IMR-90 (cell line): ENCODE measurements at regions of chr19 and their contacts with region 1.

Region 1: GRCh38 chr19:23116802-23117571 is at the start of gene ZNF730:
- DNase-seq: peak; percentile 68
- ATAC-seq: peak; percentile 98
- H3K4me3 ChIP-seq: peak within 1 kb of the TSS; percentile 95
- H3K27ac ChIP-seq: peak within 1 kb of the TSS; percentile 77; the same call in 1 of the 2 replicates
- H3K4me1 ChIP-seq: no peaks in the 10 kb centered on the region
- H3K27me3 ChIP-seq: no peaks in the 10 kb centered on the region
- CTCF ChIP-seq: no peak
- POLR2A ChIP-seq: no peak
- RAD21 ChIP-seq: peak; percentile 6; the same call in 1 of the 2 replicates
- total RNA-seq, gene ZNF730: 3.2 and 5.0 TPM in 2 replicates

Region 2: GRCh38 chr19:23033721-23034120 is 83.3 kb before region 1 on chr19:
- CTCF ChIA-PET with region 1: no interaction called
- POLR2A ChIA-PET with region 1: no interaction called
- dilution Hi-C with region 1: no loop called
- in situ Hi-C with region 1: no loop called
- intact Hi-C with region 1: no loop called
- DNase-seq: no peak
- ATAC-seq: no peak
- H3K4me3 ChIP-seq: no peak overlapping the region
- H3K27ac ChIP-seq: no peak overlapping the region
- H3K4me1 ChIP-seq: no peaks in the 10 kb centered on the region
- H3K27me3 ChIP-seq: no peaks in the 10 kb centered on the region
- CTCF ChIP-seq: no peak
- POLR2A ChIP-seq: no peak
- RAD21 ChIP-seq: no peak

Region 3: GRCh38 chr19:23054426-23054825 is 62.6 kb before region 1 on chr19:
- CTCF ChIA-PET with region 1: no interaction called
- POLR2A ChIA-PET with region 1: no interaction called
- dilution Hi-C with region 1: no loop called
- in situ Hi-C with region 1: no loop called
- intact Hi-C with region 1: no loop called
- DNase-seq: no peak
- ATAC-seq: no peak
- H3K4me3 ChIP-seq: no peak overlapping the region
- H3K27ac ChIP-seq: no peak overlapping the region
- H3K4me1 ChIP-seq: no peaks in the 10 kb centered on the region
- H3K27me3 ChIP-seq: no peaks in the 10 kb centered on the region
- CTCF ChIP-seq: no peak
- POLR2A ChIP-seq: no peak
- RAD21 ChIP-seq: no peak

Region 4: GRCh38 chr19:23249911-23250649 is 133.1 kb after region 1 on chr19 and contains the start of gene ZNF724:
- CTCF ChIA-PET with region 1: no interaction called
- POLR2A ChIA-PET with region 1: no interaction called
- dilution Hi-C with region 1: no loop called
- in situ Hi-C with region 1: no loop called
- intact Hi-C with region 1: loop called (anchors 10 kb)
- DNase-seq: peak; percentile 97
- ATAC-seq: peak; percentile 100
- H3K4me3 ChIP-seq: peak within 1 kb of the TSS; percentile 65
- H3K27ac ChIP-seq: peak within 1 kb of the TSS; percentile 38
- H3K4me1 ChIP-seq: no peaks in the 10 kb centered on the region
- H3K27me3 ChIP-seq: no peaks in the 10 kb centered on the region
- CTCF ChIP-seq: no peak
- POLR2A ChIP-seq: no peak
- RAD21 ChIP-seq: no peak
- total RNA-seq, gene ZNF724: 18.3 and 20.1 TPM in 2 replicates

Region 5: GRCh38 chr19:23395041-23395721 is 278.2 kb after region 1 on chr19 and contains the start of gene ZNF91:
- CTCF ChIA-PET with region 1: no interaction called
- POLR2A ChIA-PET with region 1: no interaction called
- dilution Hi-C with region 1: no loop called
- in situ Hi-C with region 1: no loop called
- intact Hi-C with region 1: loop called (anchors 5 kb)
- DNase-seq: peak; percentile 96
- ATAC-seq: peak; percentile 96
- H3K4me3 ChIP-seq: peak within 1 kb of the TSS; percentile 97
- H3K27ac ChIP-seq: peak within 1 kb of the TSS; percentile 97
- H3K4me1 ChIP-seq: no peaks in the 10 kb centered on the region
- H3K27me3 ChIP-seq: no peaks in the 10 kb centered on the region
- CTCF ChIP-seq: no peak
- POLR2A ChIP-seq: peak; percentile 94
- RAD21 ChIP-seq: no peak
- total RNA-seq, gene ZNF91: 17.0 and 21.4 TPM in 2 replicates